Thyroid gland (tissue), 4 donors: ENCODE measurements at regions of chr15 and their contacts with region 1.

Region 1: GRCh38 chr15:73972984-73973682 is 19.0 kb downstream of the STOML1 start:
- DNase-seq: peak; percentile 87 to 88
- H3K4me3 ChIP-seq: no peak overlapping the region
- H3K27ac ChIP-seq: no peak overlapping the region
- H3K4me1 ChIP-seq: peaks cover 6% of the 10 kb centered on the region in 2 donors
- H3K27me3 ChIP-seq: no peaks in the 10 kb centered on the region
- CTCF ChIP-seq: peak; percentile 66 to 95 (median 88)
- POLR2A ChIP-seq: no peak

Region 2: DNA sequence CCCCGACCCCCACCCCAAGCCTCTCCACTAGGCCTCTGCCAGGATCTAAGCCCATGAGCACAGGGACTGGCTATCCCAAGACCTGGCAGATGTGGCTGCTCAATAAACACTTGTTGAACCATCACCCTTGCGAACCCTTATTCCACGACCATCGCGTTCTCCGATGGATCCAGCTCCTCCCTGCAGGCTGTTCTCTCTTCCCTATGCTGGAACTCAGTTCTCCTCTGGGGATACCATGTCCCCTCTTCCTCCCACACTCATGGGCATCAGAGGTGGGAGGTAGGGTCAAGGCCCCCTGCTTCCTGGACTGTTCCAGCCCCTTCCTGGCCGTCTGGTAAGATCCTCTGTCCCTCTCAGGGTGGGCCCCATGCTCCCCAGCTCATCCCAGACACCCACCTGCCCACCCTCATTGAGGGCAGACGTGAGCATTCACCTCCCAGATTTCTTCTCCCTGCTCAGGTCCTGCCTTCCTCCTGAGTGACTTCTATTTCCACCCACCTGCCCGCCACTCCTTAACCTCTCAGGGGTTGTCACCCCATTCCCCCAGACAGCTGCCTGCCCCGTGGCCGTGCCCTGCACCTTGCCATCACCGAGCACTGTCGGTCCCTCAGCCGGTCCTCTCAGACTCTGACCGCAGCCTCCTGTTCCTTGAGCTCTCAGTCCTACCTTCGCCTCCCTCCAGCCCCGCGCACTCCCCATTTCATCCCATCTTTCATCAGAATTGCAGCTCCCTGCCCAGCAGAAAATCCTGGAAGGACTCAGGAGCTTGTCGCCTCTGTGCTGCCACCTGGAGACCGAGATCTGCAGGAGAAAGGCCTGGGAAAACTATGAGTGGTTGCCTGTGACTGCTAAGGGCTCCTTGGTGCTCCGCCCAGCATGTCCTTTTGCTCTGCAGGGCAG is 63.4 kb after region 1 on chr15:
- intact Hi-C with region 1: loop called (anchors 5 kb)
- DNase-seq: peak; percentile 83 to 87
- H3K4me3 ChIP-seq: no peak overlapping the region
- H3K27ac ChIP-seq: no peak overlapping the region
- H3K4me1 ChIP-seq: peaks cover 0 to 32% of the 10 kb centered on the region in 2 donors
- H3K27me3 ChIP-seq: no peaks in the 10 kb centered on the region
- CTCF ChIP-seq: peak in 4 of 6 experiments; percentile 26 to 69 (median 59)
- POLR2A ChIP-seq: no peak

Region 3: DNA sequence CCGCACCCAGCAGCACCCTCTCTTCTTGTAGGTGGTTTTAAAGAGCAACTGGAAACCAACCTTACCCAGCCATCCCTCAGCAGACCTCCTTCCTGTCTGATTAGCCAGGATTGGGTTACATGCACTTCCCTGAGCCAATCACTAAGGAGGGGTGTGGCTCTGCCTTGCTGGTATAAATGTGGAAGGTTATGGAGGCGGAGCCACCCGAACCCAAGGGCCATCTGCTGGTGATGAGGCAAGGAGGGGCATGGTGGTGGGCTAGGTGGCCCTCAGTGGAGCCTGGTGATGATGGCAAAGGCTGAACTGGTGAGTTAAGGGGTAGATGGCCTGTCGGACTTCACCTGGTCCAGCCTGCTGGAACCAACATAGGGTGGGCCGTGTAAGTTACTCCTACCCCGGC is 302.8 kb after region 1 on chr15:
- intact Hi-C with region 1: no loop called
- DNase-seq: no peak
- H3K4me3 ChIP-seq: no peak overlapping the region
- H3K27ac ChIP-seq: no peak overlapping the region
- H3K4me1 ChIP-seq: no peaks in the 10 kb centered on the region
- H3K27me3 ChIP-seq: no peaks in the 10 kb centered on the region
- CTCF ChIP-seq: no peak
- POLR2A ChIP-seq: no peak

Region 4: GRCh38 chr15:74307827-74308644 is 334.9 kb after region 1 on chr15:
- intact Hi-C with region 1: loop called (anchors 10 kb)
- DNase-seq: peak; percentile 57 to 62
- H3K4me3 ChIP-seq: no peak overlapping the region
- H3K27ac ChIP-seq: no peak overlapping the region
- H3K4me1 ChIP-seq: no peaks in the 10 kb centered on the region
- H3K27me3 ChIP-seq: no peaks in the 10 kb centered on the region
- CTCF ChIP-seq: peak; percentile 21 to 78 (median 56)
- POLR2A ChIP-seq: no peak